Heart right ventricle (tissue), 16 donors: ENCODE measurements at regions of chr12 and their contacts with region 1.

Region 1: DNA sequence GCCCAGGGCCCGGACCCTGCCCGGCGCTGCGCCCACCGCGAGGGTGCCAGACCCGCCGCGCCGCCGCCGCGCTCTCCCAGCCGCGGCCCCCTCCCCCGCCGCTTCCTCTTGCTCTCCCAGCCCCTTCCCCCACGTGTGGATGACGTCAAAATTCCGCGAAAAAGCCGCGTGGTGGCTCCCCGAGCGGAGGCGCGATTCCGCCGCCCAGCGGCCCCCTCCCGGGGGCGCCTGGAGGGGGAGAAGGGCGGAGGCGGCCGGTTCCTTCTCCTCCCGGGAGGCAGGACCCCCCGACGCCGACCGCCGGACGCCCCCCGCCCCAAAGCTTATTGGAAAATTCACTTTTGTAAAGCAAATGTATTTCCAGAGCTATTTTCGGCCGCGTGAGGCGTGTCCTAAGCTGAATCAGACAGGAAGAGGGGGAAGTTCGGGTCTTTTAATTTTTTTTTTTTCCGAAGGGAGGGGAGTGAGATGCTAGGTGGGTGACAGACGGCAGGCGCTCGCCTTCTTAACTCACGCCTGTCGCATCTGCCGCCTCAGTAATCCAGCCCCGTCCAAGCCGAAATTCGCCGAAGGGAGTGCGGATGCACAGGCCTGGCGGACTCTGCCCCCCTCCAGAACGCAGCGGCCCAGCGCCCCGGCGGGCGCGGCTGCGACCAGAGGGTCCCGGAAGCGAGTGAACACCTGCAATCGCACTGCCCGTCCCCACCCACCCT is 4.1 kb upstream of the CCND2 start:
- DNase-seq: peak; percentile 85 to 94
- ATAC-seq: peak; percentile 8 to 57 (median 46)
- H3K4me3 ChIP-seq: peak overlapping the region; percentile 44 to 95 (median 86)
- H3K27ac ChIP-seq: peak overlapping the region; percentile 47 to 98 (median 93)
- H3K4me1 ChIP-seq: peaks cover 5 to 50% (median 41%) of the 10 kb centered on the region in 9 donors
- H3K27me3 ChIP-seq: peaks cover 0 to 72% (median 5%) of the 10 kb centered on the region in 7 donors
- CTCF ChIP-seq: peak in 7 of 9 donors; percentile 20 to 49 (median 34)

Region 2: GRCh38 chr12:4164559-4165558 is 104.6 kb before region 1 on chr12:
- intact Hi-C with region 1: loop called in 1 of 10 experiments (anchors 10 kb)
- DNase-seq: peak; percentile 53 to 62
- ATAC-seq: peak; percentile 87 to 96 (median 94)
- H3K4me3 ChIP-seq: peak overlapping the region; percentile 10 to 59 (median 51)
- H3K27ac ChIP-seq: peak overlapping the region in 8 of 10 donors; percentile 50 to 89 (median 60)
- H3K4me1 ChIP-seq: peaks cover 0 to 16% (median 0%) of the 10 kb centered on the region in 9 donors
- H3K27me3 ChIP-seq: peaks cover 0 to 5% (median 0%) of the 10 kb centered on the region in 7 donors
- CTCF ChIP-seq: no peak